Activated T-helper 2 cell treated with anti-CD3 and anti-CD28 coated beads, Interferon-gamma antibody, Interleukin-2, Interleukin-4, amounts not matched to agents 10 μg/mL and 5 μg/mL and 100 μg/mL, durations not matched to agents 14 hours and 24 hours and 36 hours (primary cell): ENCODE measurements at regions of chr6 and their contacts with region 1.

Region 1: DNA sequence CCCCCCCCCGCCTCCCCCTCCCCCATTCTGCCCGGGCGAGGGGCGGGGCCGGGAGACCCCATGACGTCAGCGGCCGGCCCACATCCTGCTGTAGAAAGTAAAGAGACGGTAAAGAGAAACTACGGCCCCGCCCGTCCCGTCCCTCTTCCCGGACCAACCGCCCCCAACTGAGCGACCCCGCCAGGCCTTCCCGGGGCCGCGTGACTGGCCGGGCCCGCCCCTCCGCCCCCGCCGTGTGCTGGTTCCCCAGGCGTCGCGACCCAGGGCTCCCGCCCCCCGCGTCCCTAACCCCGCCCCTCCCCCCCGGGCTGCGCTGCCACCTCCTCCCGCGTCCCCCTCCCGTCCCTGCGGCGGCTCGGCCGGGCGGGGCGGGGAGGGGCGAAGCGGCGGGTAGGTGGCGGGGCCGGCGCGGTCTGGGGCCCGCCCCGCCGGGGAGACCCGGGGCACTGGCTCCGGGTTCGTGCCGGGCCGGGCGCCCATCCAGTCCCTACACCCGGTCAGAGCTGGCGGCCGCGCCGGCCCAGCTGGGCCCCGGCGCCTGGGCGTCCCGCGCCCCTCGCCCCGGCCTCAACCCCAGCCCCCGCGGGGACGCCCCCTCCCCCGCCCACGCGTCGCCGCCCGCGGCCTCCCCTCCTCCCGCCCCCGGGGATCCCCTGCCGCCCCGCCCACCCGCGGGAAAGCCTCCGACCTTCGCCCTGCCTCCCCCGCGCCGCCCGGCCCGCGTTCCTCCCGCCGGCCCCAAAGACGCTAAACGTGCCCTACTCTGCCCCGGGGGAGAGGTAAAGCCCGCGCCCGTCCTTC is 636 bp upstream of the HIVEP1 start:
- DNase-seq: peak; percentile 93
- H3K4me3 Mint-ChIP-seq: peak overlapping the region; percentile 96
- H3K27ac Mint-ChIP-seq: peak overlapping the region; percentile 93
- H3K4me1 Mint-ChIP-seq: peaks cover 46% of the 10 kb centered on the region
- H3K27me3 Mint-ChIP-seq: no peaks in the 10 kb centered on the region

Region 2: DNA sequence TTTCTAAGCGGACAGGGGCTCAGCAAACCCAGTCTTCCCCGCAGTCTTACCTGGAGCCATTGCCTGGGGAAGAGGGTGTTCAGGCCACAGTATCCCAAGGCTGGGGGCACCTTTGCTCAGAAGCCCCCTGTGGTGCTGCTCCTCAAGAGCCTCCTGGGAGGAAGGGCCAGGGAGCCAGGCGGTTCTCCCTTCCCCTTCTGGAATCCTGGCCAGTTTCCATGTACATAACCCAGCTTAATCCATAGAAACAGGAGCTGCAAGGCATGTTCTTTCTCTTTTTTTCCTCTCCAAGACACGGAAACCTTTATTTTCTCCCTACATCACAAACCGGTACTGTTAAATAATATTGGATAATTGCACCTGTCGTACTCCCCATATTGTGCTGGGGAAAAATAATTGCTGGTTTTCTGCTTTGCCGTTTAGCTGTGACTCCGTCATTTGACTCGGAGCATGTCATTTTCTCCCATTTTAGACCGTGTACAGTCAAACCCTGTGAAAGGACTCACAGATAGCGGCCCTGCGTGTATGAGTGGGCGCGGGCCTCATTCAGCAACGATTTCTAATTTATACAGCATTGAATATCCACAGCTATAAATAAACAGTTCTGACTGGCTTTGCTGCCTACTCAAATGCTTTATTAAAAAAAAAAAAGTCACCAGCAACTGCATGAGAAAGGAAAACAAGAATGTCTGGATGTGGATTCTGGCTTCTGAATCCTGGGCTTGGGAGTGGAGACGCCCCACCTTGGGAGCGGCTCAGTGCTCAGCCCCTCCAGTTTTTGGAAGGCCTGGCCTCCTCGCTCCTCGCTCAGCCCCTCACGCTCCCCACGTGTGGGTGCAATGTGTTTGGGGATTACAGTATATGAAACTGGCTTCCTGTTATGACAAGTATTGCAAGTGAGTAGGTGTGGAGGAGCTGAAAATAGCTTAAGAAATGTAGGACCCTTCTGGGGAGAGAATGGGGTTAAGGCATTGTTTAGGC is 300.2 kb before region 1 on chr6:
- intact Hi-C with region 1: loop called (anchors 2 kb)
- DNase-seq: no peak
- H3K4me3 Mint-ChIP-seq: peak overlapping the region; percentile 54
- H3K27ac Mint-ChIP-seq: peak overlapping the region; percentile 96
- H3K4me1 Mint-ChIP-seq: peaks cover 59% of the 10 kb centered on the region
- H3K27me3 Mint-ChIP-seq: no peaks in the 10 kb centered on the region

Region 3: GRCh38 chr6:11785774-11786579 is 225.5 kb before region 1 on chr6:
- intact Hi-C with region 1: loop called (anchors 10 kb)
- DNase-seq: peak; percentile 20
- H3K4me3 Mint-ChIP-seq: peak overlapping the region; percentile 40
- H3K27ac Mint-ChIP-seq: no peak overlapping the region
- H3K4me1 Mint-ChIP-seq: peaks cover 6% of the 10 kb centered on the region
- H3K27me3 Mint-ChIP-seq: no peaks in the 10 kb centered on the region

Region 4: DNA sequence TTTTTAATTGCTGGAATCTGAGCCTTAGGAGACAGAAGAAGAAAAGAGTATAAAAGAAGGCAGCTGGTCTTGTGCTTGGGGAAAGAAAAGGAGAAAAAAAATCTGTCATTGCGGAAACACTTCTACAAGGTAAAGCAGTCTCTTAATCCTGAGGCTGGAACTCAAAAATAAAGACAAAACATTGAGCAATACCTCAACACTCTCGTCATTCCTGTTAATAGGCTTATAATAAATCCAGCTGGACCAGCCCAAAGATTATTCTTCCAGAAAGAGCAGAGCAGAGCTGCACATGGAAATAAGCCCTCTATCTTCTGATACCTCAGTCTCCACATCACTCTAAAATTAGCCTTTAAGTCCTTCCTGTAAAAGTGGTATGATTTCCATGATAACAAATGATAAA is 61.4 kb before region 1 on chr6:
- intact Hi-C with region 1: no loop called
- DNase-seq: no peak
- H3K4me3 Mint-ChIP-seq: no peak overlapping the region
- H3K27ac Mint-ChIP-seq: no peak overlapping the region
- H3K4me1 Mint-ChIP-seq: no peaks in the 10 kb centered on the region
- H3K27me3 Mint-ChIP-seq: no peaks in the 10 kb centered on the region

Region 5: DNA sequence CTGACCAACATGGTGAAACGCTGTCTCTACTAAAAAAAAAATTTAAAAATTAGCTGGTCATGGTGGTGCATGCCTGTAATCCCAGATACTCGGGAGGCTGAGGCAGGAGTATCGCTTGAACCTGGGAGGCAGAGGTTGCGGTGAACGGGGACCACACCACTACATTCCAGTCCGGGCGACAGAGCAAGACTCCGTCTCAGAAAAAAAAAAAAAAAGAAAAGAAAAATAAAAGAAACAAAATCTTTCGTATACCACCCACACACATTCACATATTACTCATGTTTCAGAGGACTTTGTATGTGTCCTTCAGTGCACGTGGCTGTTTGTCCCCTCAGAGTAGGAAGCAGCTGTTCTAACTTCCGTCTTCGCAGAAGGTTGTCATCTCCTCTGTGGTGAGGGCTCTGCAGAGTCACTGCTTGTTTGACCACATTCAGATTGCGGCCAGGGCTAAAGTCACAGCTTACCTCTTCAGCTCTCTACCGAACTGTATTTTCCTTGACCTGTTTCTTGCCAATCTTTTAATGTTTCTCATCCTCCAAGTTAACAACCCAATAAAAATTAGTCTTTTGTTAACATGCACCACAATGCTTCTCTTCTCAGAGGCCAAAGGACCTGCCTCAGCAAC is 36.0 kb before region 1 on chr6:
- intact Hi-C with region 1: loop called (anchors 5 kb)
- DNase-seq: peak; percentile 15
- H3K4me3 Mint-ChIP-seq: no peak overlapping the region
- H3K27ac Mint-ChIP-seq: no peak overlapping the region
- H3K4me1 Mint-ChIP-seq: peaks cover 24% of the 10 kb centered on the region
- H3K27me3 Mint-ChIP-seq: no peaks in the 10 kb centered on the region

Region 6: GRCh38 chr6:12060780-12061619 is 49.5 kb after region 1 on chr6:
- intact Hi-C with region 1: loop called (anchors 2 kb)
- DNase-seq: peak; percentile 71
- H3K4me3 Mint-ChIP-seq: peak overlapping the region; percentile 80
- H3K27ac Mint-ChIP-seq: peak overlapping the region; percentile 88
- H3K4me1 Mint-ChIP-seq: peaks cover 71% of the 10 kb centered on the region
- H3K27me3 Mint-ChIP-seq: no peaks in the 10 kb centered on the region

Region 7: DNA sequence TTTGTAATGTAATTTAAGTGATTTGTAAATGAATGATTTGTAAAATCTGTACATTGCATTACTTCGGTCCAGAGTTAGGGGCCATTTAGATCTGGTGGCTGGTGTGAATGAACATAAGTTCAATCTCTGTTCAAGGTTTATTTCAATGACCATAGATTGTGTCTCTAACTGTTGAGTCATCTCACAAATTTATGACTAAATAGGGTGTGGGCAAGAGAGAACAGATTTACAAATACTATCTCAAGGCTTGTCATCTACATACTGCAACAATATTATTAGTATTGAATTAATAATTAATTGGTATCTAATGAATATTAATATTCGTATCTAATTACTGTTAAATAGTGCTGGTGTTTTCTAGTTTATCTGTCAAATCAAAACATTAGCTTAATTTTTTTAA is 163.4 kb after region 1 on chr6:
- intact Hi-C with region 1: no loop called
- DNase-seq: no peak
- H3K4me3 Mint-ChIP-seq: no peak overlapping the region
- H3K27ac Mint-ChIP-seq: no peak overlapping the region
- H3K4me1 Mint-ChIP-seq: no peaks in the 10 kb centered on the region
- H3K27me3 Mint-ChIP-seq: peaks cover 12% of the 10 kb centered on the region